ENCODE measurements at regions of chr10 and their contacts with region 1.

Region 1: GRCh38 chr10:97553575-97554031 is 19.0 kb upstream of the ANKRD2 start:
- DNase-seq: peak; percentile 62
- ATAC-seq: peak; percentile 98
- H3K4me3 ChIP-seq: no peak overlapping the region
- H3K27ac ChIP-seq: no peak overlapping the region
- H3K4me1 ChIP-seq: peaks cover 35% of the 10 kb centered on the region
- H3K27me3 ChIP-seq: no peaks in the 10 kb centered on the region
- CTCF ChIP-seq: peak; percentile 95
- EP300 ChIP-seq: no peak
- POLR2A ChIP-seq: no peak
- RAD21 ChIP-seq: peak; percentile 72

Region 2: GRCh38 chr10:97463363-97464132 is 90.1 kb before region 1 on chr10:
- CTCF ChIA-PET with region 1: interaction called, 19 read pairs
- POLR2A ChIA-PET with region 1: interaction called, 4 read pairs
- in situ Hi-C with region 1: loop called (anchors 5 kb)
- intact Hi-C with region 1: loop called (anchors 1 kb)
- DNase-seq: peak; percentile 87
- ATAC-seq: peak; percentile 88
- H3K4me3 ChIP-seq: no peak overlapping the region
- H3K27ac ChIP-seq: peak overlapping the region; percentile 55
- H3K4me1 ChIP-seq: peaks cover 25% of the 10 kb centered on the region
- H3K27me3 ChIP-seq: no peaks in the 10 kb centered on the region
- CTCF ChIP-seq: peak; percentile 91
- EP300 ChIP-seq: peak in 1 of 2 experiments; percentile 67; a peak in 1 of 4 replicates
- POLR2A ChIP-seq: no peak
- RAD21 ChIP-seq: peak; percentile 88

Region 3: GRCh38 chr10:97498076-97498840 is 55.3 kb before region 1 on chr10 and contains the start of gene MMS19:
- CTCF ChIA-PET with region 1: no interaction called
- POLR2A ChIA-PET with region 1: interaction called, 4 read pairs
- in situ Hi-C with region 1: no loop called
- intact Hi-C with region 1: loop called (anchors 2 kb)
- DNase-seq: peak; percentile 93
- ATAC-seq: peak; percentile 76
- H3K4me3 ChIP-seq: peak within 1 kb of the TSS; percentile 67 to 90 (median 89)
- H3K27ac ChIP-seq: peak within 1 kb of the TSS; percentile 90
- H3K4me1 ChIP-seq: peaks cover 61% of the 10 kb centered on the region
- H3K27me3 ChIP-seq: no peaks in the 10 kb centered on the region; a peak in 1 of 5 replicates
- CTCF ChIP-seq: no peak
- EP300 ChIP-seq: no peak
- POLR2A ChIP-seq: peak; percentile 49 to 88; a peak in 3 of 4 replicates
- RAD21 ChIP-seq: no peak
- total RNA-seq, gene MMS19: 76.4 and 95.9 TPM in 2 replicates

Region 4: GRCh38 chr10:97534746-97535367 is 18.7 kb before region 1 on chr10:
- CTCF ChIA-PET with region 1: interaction called, 13 read pairs
- POLR2A ChIA-PET with region 1: no interaction called
- in situ Hi-C with region 1: no loop called
- intact Hi-C with region 1: loop called (anchors 1 kb)
- DNase-seq: peak; percentile 44
- ATAC-seq: peak; percentile 94
- H3K4me3 ChIP-seq: no peak overlapping the region
- H3K27ac ChIP-seq: no peak overlapping the region
- H3K4me1 ChIP-seq: peaks cover 7% of the 10 kb centered on the region
- H3K27me3 ChIP-seq: no peaks in the 10 kb centered on the region
- CTCF ChIP-seq: peak; percentile 83
- EP300 ChIP-seq: no peak
- POLR2A ChIP-seq: no peak
- RAD21 ChIP-seq: peak; percentile 41; the same call in 1 of the 2 replicates